Naive thymus-derived CD4-positive, alpha-beta T cell (primary cell): ENCODE measurements at regions of chr1 and their contacts with region 1.

Region 1: GRCh38 chr1:225881969-225882693 is at the start of gene TMEM63A:
- DNase-seq: peak; percentile 83 to 89 (median 87)
- ATAC-seq: peak; percentile 84
- H3K4me3 ChIP-seq: peak within 1 kb of the TSS; percentile 80
- H3K4me3 Mint-ChIP-seq: peak within 1 kb of the TSS; percentile 89 to 99 (median 97)
- H3K27ac ChIP-seq: peak within 1 kb of the TSS; percentile 90
- H3K27ac Mint-ChIP-seq: peak within 1 kb of the TSS; percentile 91 to 98 (median 96)
- H3K4me1 ChIP-seq: peaks cover 41% of the 10 kb centered on the region in 2 donors
- H3K4me1 Mint-ChIP-seq: peaks cover 37 to 50% (median 48%) of the 10 kb centered on the region in 7 donors
- H3K27me3 ChIP-seq: no peaks in the 10 kb centered on the region
- H3K27me3 Mint-ChIP-seq: peaks cover 0 to 21% (median 0%) of the 10 kb centered on the region in 5 donors
- total RNA-seq, gene TMEM63A: 189 to 611 (median 383) TPM

Region 2: DNA sequence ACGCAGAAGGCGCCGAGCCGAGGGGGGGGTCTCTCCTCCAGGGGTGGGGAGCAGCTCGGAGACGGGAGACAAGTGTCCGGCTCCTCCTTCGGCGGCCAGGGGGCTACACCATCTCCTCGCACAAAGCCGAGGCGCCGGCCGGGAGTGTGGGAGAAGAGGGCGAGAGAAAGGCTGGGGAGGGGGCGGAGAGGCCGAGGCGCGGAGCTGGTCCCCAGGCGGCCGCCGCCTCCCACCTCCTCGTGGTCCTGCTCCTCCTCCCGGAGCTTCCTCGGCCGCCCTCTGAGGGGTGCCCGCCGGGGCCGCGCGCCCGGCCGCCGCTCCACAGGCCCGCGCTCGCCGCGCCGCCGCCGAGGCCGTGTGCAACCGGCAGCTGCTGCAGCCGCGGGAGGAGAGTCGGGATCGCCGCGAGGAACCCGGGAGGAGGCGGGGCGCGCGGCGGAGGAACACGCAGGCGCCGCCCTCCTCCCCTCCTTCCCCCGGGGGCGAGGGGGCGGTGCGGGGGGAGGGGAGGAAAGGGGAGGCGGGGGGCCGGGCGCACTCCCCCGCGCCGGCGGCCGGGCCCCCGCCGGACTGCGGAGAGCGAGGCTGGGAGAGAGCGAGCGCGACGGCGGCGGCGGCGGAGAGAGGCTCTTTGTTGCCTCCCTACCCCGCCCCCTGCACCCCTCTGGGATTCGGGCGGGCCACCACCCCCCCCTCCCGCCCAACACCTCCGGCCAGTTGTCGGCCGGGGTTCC is 229.2 kb before region 1 on chr1 and contains the start of gene ENAH:
- CTCF ChIA-PET with region 1: no interaction called
- POLR2A ChIA-PET with region 1: no interaction called
- intact Hi-C with region 1: no loop called
- DNase-seq: peak in 7 of 9 donors; percentile 12 to 49 (median 21)
- ATAC-seq: peak; percentile 72
- H3K4me3 ChIP-seq: peak within 1 kb of the TSS; percentile 58
- H3K4me3 Mint-ChIP-seq: peak within 1 kb of the TSS; percentile 79 to 95 (median 88)
- H3K27ac ChIP-seq: no peak within 1 kb of the TSS
- H3K27ac Mint-ChIP-seq: peak within 1 kb of the TSS in 4 of 9 donors; percentile 16 to 78 (median 70)
- H3K4me1 ChIP-seq: peaks cover 5 to 12% of the 10 kb centered on the region in 2 donors
- H3K4me1 Mint-ChIP-seq: peaks cover 9 to 19% (median 16%) of the 10 kb centered on the region in 7 donors
- H3K27me3 ChIP-seq: peaks cover 0 to 12% of the 10 kb centered on the region in 2 donors
- H3K27me3 Mint-ChIP-seq: peaks cover 30 to 71% (median 40%) of the 10 kb centered on the region in 5 donors
- total RNA-seq, gene ENAH: 0.08 to 0.42 (median 0.16) TPM in 3 of 5 experiments, not detected in the others

Region 3: DNA sequence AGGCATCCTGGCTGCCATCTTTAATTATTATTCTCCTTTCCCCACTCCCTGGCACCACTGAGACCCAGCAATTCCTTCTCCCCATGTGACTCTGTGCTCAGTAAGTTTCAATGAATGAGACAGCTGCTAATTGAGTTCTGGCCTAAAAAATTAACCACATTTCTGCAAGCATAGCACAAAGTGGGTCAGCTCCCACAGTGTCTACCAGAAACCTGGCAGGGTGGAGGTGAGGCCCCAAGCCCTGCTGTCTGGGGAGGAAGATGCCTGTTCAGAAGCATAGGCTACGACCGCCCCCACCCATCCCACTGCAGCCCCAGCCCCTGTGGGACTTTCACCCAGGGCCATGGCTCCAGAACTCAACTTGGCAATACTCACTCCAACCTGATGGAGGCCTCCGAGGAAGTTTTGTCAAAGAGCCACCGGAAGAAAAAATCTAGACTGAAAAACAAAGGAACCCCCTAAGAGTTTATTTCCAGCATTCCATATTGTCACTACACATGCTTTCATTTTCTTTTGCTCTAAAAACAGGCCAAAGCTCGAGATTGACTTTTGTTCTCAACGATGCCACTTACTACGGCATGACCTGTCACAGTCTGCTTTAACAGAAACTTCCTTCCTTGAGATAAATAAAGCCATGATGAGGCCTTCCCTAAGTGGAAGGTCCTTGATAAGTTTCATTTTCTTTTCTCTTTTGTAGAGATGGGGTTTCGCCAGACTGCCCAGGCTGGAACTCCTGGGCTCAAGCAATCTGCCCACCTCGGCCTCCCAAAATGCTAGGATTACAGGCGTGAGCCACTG is 26.4 kb before region 1 on chr1:
- CTCF ChIA-PET with region 1: interaction called, 4 read pairs
- POLR2A ChIA-PET with region 1: interaction called, 32 read pairs
- intact Hi-C with region 1: no loop called
- DNase-seq: no peak
- ATAC-seq: no peak
- H3K4me3 ChIP-seq: no peak overlapping the region
- H3K4me3 Mint-ChIP-seq: no peak overlapping the region
- H3K27ac ChIP-seq: no peak overlapping the region
- H3K27ac Mint-ChIP-seq: peak overlapping the region in 7 of 9 donors; percentile 36 to 81 (median 69)
- H3K4me1 ChIP-seq: peaks cover 0 to 12% of the 10 kb centered on the region in 2 donors
- H3K4me1 Mint-ChIP-seq: peaks cover 22 to 51% (median 33%) of the 10 kb centered on the region in 7 donors
- H3K27me3 ChIP-seq: no peaks in the 10 kb centered on the region
- H3K27me3 Mint-ChIP-seq: no peaks in the 10 kb centered on the region

Region 4: DNA sequence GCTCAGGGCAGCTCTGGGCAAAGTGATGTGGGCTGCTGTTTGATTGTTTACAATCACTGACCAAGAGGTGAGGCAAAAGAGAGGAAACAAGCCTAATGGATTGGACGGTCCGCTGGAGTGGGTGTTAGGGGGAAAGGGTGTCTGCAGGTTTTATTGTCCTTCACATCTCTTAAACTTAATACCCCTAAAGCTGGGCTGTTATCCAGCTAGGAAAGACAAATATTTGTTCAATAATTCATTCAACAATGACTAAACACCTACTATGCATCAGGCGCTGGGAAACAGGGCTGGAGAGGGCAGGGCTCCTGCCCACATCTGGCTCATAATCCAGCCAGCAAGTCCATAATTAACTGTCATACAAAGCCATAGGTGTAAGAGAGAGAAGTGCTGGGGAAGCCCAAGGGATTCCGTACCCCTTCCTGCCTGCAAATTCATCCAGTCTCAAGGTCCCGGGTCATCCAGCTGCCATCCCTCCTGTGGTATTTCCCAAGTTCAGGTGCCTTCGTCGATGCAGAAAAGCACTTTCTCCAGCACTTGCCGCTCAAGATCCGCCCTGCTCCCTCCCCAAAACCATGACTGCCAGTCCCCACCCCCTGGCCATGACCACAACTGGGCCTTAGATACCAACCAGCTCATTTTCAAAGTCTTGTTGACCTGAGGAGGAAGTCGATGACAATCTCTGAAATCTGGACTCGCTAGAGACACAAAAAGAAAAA is 10.6 kb before region 1 on chr1:
- CTCF ChIA-PET with region 1: interaction called, 3 read pairs
- POLR2A ChIA-PET with region 1: interaction called, 55 read pairs
- intact Hi-C with region 1: loop called (anchors 1 kb)
- DNase-seq: no peak
- ATAC-seq: peak; percentile 51
- H3K4me3 ChIP-seq: no peak overlapping the region
- H3K4me3 Mint-ChIP-seq: peak overlapping the region in 1 of 10 donors; percentile 48
- H3K27ac ChIP-seq: peak overlapping the region; percentile 37
- H3K27ac Mint-ChIP-seq: peak overlapping the region in 7 of 9 donors; percentile 17 to 73 (median 61)
- H3K4me1 ChIP-seq: peaks cover 26 to 31% of the 10 kb centered on the region in 2 donors
- H3K4me1 Mint-ChIP-seq: peaks cover 45 to 77% (median 68%) of the 10 kb centered on the region in 7 donors
- H3K27me3 ChIP-seq: no peaks in the 10 kb centered on the region
- H3K27me3 Mint-ChIP-seq: no peaks in the 10 kb centered on the region

Region 5: DNA sequence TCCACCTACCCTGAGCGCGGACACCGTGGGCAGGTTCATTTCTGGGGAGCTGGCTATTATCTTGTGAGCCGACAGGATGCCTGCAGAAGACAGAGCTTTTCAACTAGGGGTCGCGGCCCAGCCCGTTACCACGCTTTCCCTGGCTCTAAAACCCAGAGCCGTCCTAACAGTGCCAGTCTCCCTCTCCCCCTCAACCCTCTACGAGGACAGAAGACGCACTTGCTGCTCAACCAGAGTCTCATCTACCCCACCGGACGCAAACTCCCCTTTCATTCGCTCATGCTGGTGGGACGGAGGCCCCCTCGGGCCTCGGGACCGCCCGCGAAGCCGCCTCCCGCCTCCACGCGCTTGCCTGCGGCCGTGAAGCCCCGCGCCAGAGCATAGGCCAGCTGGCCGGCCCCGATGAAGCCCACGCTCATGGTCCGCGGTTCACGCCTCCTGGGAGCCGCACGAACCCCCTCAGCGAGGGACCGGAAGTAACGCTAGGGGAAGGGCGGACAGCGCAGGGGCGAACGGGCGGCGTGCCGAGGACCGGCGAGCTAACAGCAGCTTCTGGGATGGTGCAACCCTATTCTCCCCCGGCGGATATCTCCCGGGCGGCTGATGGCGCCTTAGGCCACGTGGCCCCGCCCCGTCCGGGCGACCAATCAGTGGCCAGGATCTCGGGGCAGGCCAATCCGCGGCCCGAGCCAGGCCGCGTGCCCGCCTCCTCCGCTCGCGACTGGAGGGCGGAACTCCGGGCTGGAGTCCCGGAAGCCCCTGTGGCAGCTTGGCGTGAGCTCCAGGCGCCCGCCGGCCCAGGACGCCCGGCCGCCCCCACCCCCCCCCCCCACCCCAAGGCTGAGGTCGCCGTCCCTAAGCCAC is 41.8 kb after region 1 on chr1 and contains the start of gene PYCR2:
- CTCF ChIA-PET with region 1: interaction called, 3 read pairs
- POLR2A ChIA-PET with region 1: interaction called, 90 read pairs
- intact Hi-C with region 1: loop called (anchors 1 kb)
- DNase-seq: peak; percentile 92 to 97 (median 94)
- ATAC-seq: peak; percentile 99
- H3K4me3 ChIP-seq: peak within 1 kb of the TSS; percentile 100
- H3K4me3 Mint-ChIP-seq: peak within 1 kb of the TSS; percentile 86 to 98 (median 94)
- H3K27ac ChIP-seq: peak within 1 kb of the TSS; percentile 95
- H3K27ac Mint-ChIP-seq: peak within 1 kb of the TSS; percentile 90 to 98 (median 95)
- H3K4me1 ChIP-seq: peaks cover 11 to 65% of the 10 kb centered on the region in 2 donors
- H3K4me1 Mint-ChIP-seq: peaks cover 45 to 75% (median 60%) of the 10 kb centered on the region in 7 donors
- H3K27me3 ChIP-seq: no peaks in the 10 kb centered on the region
- H3K27me3 Mint-ChIP-seq: no peaks in the 10 kb centered on the region
- total RNA-seq, gene PYCR2: 46.4 to 137 (median 109) TPM

Region 6: GRCh38 chr1:226176870-226177269 is 294.7 kb after region 1 on chr1:
- CTCF ChIA-PET with region 1: no interaction called
- POLR2A ChIA-PET with region 1: no interaction called
- intact Hi-C with region 1: no loop called
- DNase-seq: no peak
- ATAC-seq: no peak
- H3K4me3 ChIP-seq: no peak overlapping the region
- H3K4me3 Mint-ChIP-seq: no peak overlapping the region
- H3K27ac ChIP-seq: no peak overlapping the region
- H3K27ac Mint-ChIP-seq: no peak overlapping the region
- H3K4me1 ChIP-seq: peaks cover 0 to 17% of the 10 kb centered on the region in 2 donors
- H3K4me1 Mint-ChIP-seq: peaks cover 25 to 63% (median 49%) of the 10 kb centered on the region in 7 donors
- H3K27me3 ChIP-seq: no peaks in the 10 kb centered on the region
- H3K27me3 Mint-ChIP-seq: no peaks in the 10 kb centered on the region

Region 7: GRCh38 chr1:226407497-226408284 is 525.6 kb after region 1 on chr1 and contains the start of gene PARP1:
- CTCF ChIA-PET with region 1: no interaction called
- POLR2A ChIA-PET with region 1: no interaction called
- intact Hi-C with region 1: loop called in 1 of 2 experiments (anchors 5 kb)
- DNase-seq: peak; percentile 83 to 93 (median 89)
- ATAC-seq: peak; percentile 94
- H3K4me3 ChIP-seq: peak within 1 kb of the TSS; percentile 82
- H3K4me3 Mint-ChIP-seq: peak within 1 kb of the TSS; percentile 89 to 99 (median 94)
- H3K27ac ChIP-seq: peak within 1 kb of the TSS; percentile 74
- H3K27ac Mint-ChIP-seq: peak within 1 kb of the TSS; percentile 68 to 96 (median 93)
- H3K4me1 ChIP-seq: peaks cover 23 to 30% of the 10 kb centered on the region in 2 donors
- H3K4me1 Mint-ChIP-seq: peaks cover 37 to 46% (median 40%) of the 10 kb centered on the region in 7 donors
- H3K27me3 ChIP-seq: no peaks in the 10 kb centered on the region
- H3K27me3 Mint-ChIP-seq: peaks cover 0 to 3% (median 0%) of the 10 kb centered on the region in 5 donors
- total RNA-seq, gene PARP1: 63.6 to 165 (median 89.3) TPM